Activated CD8-positive, alpha-beta T cell treated with anti-CD3 and anti-CD28 coated beads, Interleukin-2, amount 10 ng/mL, durations not matched to agents 7 days and 5 days (primary cell): ENCODE measurements at regions of chr13 and their contacts with region 1.

Region 1: DNA sequence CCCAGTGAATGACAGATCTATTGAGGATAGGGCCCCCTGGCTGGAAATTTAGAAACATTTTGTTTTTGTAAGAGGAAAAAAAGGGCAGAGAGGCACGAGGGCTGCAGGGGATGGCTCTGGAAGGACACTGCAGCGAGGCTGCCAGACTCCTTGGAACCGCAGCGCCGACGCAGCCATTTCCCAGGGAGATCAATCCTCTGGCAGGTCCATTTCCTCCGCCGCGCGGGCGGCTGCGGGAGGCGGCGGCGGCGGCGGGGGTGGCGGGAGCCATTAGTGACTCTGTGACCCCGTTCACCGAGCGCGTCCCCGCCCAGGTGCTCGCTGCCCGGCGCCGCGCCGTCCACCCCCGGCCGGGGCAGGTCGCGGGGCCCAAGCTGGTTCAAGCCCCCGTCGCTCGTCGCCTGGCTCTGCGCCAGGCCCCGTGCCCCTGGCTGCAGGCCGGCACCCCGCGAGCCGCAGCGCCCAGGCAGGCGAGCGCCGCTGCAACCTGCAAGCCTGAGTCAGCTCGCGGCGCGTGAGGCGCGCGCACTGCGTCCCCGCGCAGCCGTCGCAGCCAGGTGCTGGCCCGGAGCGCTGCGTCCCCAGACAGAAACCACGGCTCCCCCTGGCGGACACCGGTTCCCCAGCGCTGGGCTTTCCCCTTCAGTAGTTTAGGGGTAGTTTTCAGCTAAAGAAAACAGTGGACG is 192.6 kb downstream of the KATNAL1 start:
- DNase-seq: peak; percentile 94
- ATAC-seq: peak; percentile 96
- H3K4me3 Mint-ChIP-seq: peak overlapping the region; percentile 78
- H3K27ac Mint-ChIP-seq: peak overlapping the region; percentile 9
- H3K4me1 Mint-ChIP-seq: peaks cover 38% of the 10 kb centered on the region
- H3K27me3 Mint-ChIP-seq: peaks cover 8% of the 10 kb centered on the region

Region 2: GRCh38 chr13:29514323-29515310 is 600.1 kb before region 1 on chr13:
- CTCF ChIA-PET with region 1: no interaction called
- POLR2A ChIA-PET with region 1: no interaction called
- DNase-seq: no peak
- ATAC-seq: no peak
- H3K4me3 Mint-ChIP-seq: no peak overlapping the region
- H3K27ac Mint-ChIP-seq: no peak overlapping the region
- H3K4me1 Mint-ChIP-seq: no peaks in the 10 kb centered on the region
- H3K27me3 Mint-ChIP-seq: no peaks in the 10 kb centered on the region

Region 3: GRCh38 chr13:29556742-29557141 is 558.0 kb before region 1 on chr13:
- CTCF ChIA-PET with region 1: no interaction called
- POLR2A ChIA-PET with region 1: no interaction called
- DNase-seq: no peak
- ATAC-seq: no peak
- H3K4me3 Mint-ChIP-seq: no peak overlapping the region
- H3K27ac Mint-ChIP-seq: no peak overlapping the region
- H3K4me1 Mint-ChIP-seq: no peaks in the 10 kb centered on the region
- H3K27me3 Mint-ChIP-seq: no peaks in the 10 kb centered on the region

Region 4: DNA sequence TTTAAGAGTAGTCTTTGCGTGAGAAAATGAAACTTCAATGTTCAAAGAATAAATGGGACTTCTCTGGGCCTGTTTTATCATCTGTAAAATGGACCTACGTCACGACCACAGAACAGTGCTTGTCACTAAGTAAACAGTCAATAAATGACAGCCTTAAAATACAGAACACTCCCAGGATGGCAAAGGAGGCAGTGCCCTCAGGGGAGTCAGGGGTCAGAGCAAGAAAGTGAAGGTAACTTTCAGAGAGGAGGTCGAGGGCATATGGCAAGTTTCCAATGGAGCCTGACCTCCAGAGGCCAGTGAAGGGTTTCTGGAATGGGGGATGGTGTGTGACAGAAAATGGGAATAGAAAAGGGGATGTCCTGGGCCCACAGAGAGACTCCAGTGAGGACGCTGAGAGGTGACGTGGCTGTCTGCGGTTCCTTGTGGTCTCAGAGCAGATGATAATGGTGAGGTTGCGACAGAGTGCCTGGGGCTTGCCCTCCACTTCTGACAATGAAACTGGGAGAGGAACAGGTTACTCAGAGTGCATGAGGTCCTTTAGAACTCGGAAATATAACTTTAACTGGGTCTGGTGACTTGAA is 356.1 kb before region 1 on chr13:
- CTCF ChIA-PET with region 1: interaction called, 60 read pairs
- POLR2A ChIA-PET with region 1: no interaction called
- DNase-seq: peak; percentile 55
- ATAC-seq: peak; percentile 75
- H3K4me3 Mint-ChIP-seq: no peak overlapping the region
- H3K27ac Mint-ChIP-seq: peak overlapping the region; percentile 18
- H3K4me1 Mint-ChIP-seq: peaks cover 23% of the 10 kb centered on the region
- H3K27me3 Mint-ChIP-seq: no peaks in the 10 kb centered on the region

Region 5: GRCh38 chr13:29817604-29818378 is 296.9 kb before region 1 on chr13:
- CTCF ChIA-PET with region 1: interaction called, 15 read pairs
- POLR2A ChIA-PET with region 1: interaction called, 3 read pairs
- DNase-seq: no peak
- ATAC-seq: no peak
- H3K4me3 Mint-ChIP-seq: no peak overlapping the region
- H3K27ac Mint-ChIP-seq: no peak overlapping the region
- H3K4me1 Mint-ChIP-seq: peaks cover 15% of the 10 kb centered on the region
- H3K27me3 Mint-ChIP-seq: no peaks in the 10 kb centered on the region

Region 6: GRCh38 chr13:29923554-29924481 is 190.9 kb before region 1 on chr13:
- CTCF ChIA-PET with region 1: interaction called, 44 read pairs
- POLR2A ChIA-PET with region 1: no interaction called
- DNase-seq: peak; percentile 50
- ATAC-seq: peak; percentile 44
- H3K4me3 Mint-ChIP-seq: no peak overlapping the region
- H3K27ac Mint-ChIP-seq: no peak overlapping the region
- H3K4me1 Mint-ChIP-seq: peaks cover 22% of the 10 kb centered on the region
- H3K27me3 Mint-ChIP-seq: peaks cover 2% of the 10 kb centered on the region

Region 7: GRCh38 chr13:30045916-30046704 is 68.6 kb before region 1 on chr13:
- CTCF ChIA-PET with region 1: interaction called, 33 read pairs
- POLR2A ChIA-PET with region 1: no interaction called
- DNase-seq: no peak
- ATAC-seq: no peak
- H3K4me3 Mint-ChIP-seq: no peak overlapping the region
- H3K27ac Mint-ChIP-seq: peak overlapping the region; percentile 16
- H3K4me1 Mint-ChIP-seq: peaks cover 37% of the 10 kb centered on the region
- H3K27me3 Mint-ChIP-seq: no peaks in the 10 kb centered on the region